CD8-positive, alpha-beta T cell (primary cell): ENCODE measurements at regions of chr5 and their contacts with region 1.

Region 1: GRCh38 chr5:176660860-176661641 is 13.8 kb downstream of the TSPAN17 start:
- DNase-seq: peak; percentile 51 to 88 (median 77)
- ATAC-seq: peak; percentile 75
- H3K4me3 ChIP-seq: no peak overlapping the region
- H3K4me3 Mint-ChIP-seq: peak overlapping the region; percentile 42
- H3K27ac ChIP-seq: no peak overlapping the region
- H3K27ac Mint-ChIP-seq: peak overlapping the region; percentile 70
- H3K4me1 ChIP-seq: peaks cover 27% of the 10 kb centered on the region
- H3K4me1 Mint-ChIP-seq: peaks cover 30% of the 10 kb centered on the region
- H3K27me3 ChIP-seq: no peaks in the 10 kb centered on the region
- H3K27me3 Mint-ChIP-seq: peaks cover 8% of the 10 kb centered on the region
- CTCF ChIP-seq: peak; percentile 98

Region 2: GRCh38 chr5:176636426-176636825 is 24.6 kb before region 1 on chr5:
- CTCF ChIA-PET with region 1: interaction called, 10 read pairs
- POLR2A ChIA-PET with region 1: no interaction called
- intact Hi-C with region 1: no loop called
- DNase-seq: no peak
- ATAC-seq: no peak
- H3K4me3 ChIP-seq: no peak overlapping the region
- H3K4me3 Mint-ChIP-seq: no peak overlapping the region
- H3K27ac ChIP-seq: no peak overlapping the region
- H3K27ac Mint-ChIP-seq: no peak overlapping the region
- H3K4me1 ChIP-seq: no peaks in the 10 kb centered on the region
- H3K4me1 Mint-ChIP-seq: no peaks in the 10 kb centered on the region
- H3K27me3 ChIP-seq: peaks cover 5 to 7% of the 10 kb centered on the region in 2 experiments
- H3K27me3 Mint-ChIP-seq: peaks cover 39% of the 10 kb centered on the region
- CTCF ChIP-seq: no peak

Region 3: DNA sequence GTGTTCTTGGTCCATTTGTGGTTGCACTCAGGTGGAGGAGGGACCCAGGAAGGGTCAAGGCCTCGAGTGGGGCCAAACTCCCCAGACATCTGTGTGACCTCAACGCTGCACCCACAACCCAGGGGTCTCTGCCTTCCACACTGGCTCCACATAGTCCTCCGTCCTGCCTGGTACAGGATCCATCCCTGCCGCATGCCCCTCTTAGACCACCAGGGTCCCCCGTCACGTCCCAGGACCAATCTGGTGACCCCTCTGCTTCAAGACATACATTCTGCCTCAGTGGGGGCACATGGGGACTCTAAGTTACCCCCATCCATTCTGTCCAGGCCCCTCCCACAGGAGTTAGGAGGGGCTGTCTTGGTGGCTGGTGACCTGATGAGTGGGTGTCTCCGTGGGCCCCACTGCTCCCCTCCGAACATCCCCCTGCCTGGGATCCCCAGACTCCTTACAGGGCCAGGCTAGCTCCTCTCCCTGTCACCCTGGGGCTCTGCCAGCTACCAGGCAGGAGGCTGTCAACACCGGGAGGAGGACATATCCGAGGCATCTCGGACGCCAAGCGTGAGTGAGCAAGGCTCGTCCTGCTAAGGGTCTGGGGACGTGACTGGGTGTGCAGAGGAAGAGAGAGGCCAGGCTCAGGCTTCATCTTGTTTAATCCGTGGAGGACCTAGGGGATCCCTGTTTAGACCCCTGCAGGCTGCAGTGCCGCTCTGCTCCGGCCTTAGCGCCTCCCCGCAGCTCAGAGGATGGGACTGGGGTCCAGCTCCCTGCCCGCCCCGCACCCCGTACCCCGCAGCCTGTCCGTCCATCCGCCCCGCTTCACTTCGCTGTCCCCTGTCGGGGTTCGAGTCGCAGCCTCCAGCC is 18.5 kb after region 1 on chr5:
- CTCF ChIA-PET with region 1: interaction called, 10 read pairs
- POLR2A ChIA-PET with region 1: no interaction called
- intact Hi-C with region 1: no loop called
- DNase-seq: no peak
- ATAC-seq: no peak
- H3K4me3 ChIP-seq: no peak overlapping the region
- H3K4me3 Mint-ChIP-seq: no peak overlapping the region
- H3K27ac ChIP-seq: no peak overlapping the region
- H3K27ac Mint-ChIP-seq: no peak overlapping the region
- H3K4me1 ChIP-seq: no peaks in the 10 kb centered on the region
- H3K4me1 Mint-ChIP-seq: no peaks in the 10 kb centered on the region
- H3K27me3 ChIP-seq: peaks cover 7 to 11% of the 10 kb centered on the region in 2 experiments
- H3K27me3 Mint-ChIP-seq: peaks cover 42% of the 10 kb centered on the region
- CTCF ChIP-seq: no peak

Region 4: GRCh38 chr5:176817841-176818377 is 156.9 kb after region 1 on chr5:
- CTCF ChIA-PET with region 1: no interaction called
- POLR2A ChIA-PET with region 1: no interaction called
- intact Hi-C with region 1: loop called (anchors 5 kb)
- DNase-seq: peak in 3 of 9 experiments; percentile 25 to 49 (median 30)
- ATAC-seq: peak; percentile 34
- H3K4me3 ChIP-seq: peak overlapping the region; percentile 16 to 30
- H3K4me3 Mint-ChIP-seq: peak overlapping the region; percentile 71
- H3K27ac ChIP-seq: no peak overlapping the region
- H3K27ac Mint-ChIP-seq: no peak overlapping the region
- H3K4me1 ChIP-seq: no peaks in the 10 kb centered on the region
- H3K4me1 Mint-ChIP-seq: peaks cover 14% of the 10 kb centered on the region
- H3K27me3 ChIP-seq: peaks cover 5 to 16% of the 10 kb centered on the region in 2 experiments
- H3K27me3 Mint-ChIP-seq: peaks cover 73% of the 10 kb centered on the region
- CTCF ChIP-seq: no peak